ENCODE measurements at regions of chr15 and their contacts with region 1.

Region 1: GRCh38 chr15:65298731-65299130 is 2.9 kb downstream of the RNU5A-1 start:
- DNase-seq: no peak
- ATAC-seq: no peak
- H3K4me3 ChIP-seq: no peak overlapping the region
- H3K27ac ChIP-seq: no peak overlapping the region
- H3K4me1 ChIP-seq: peaks cover 17 to 33% of the 10 kb centered on the region in 2 experiments
- H3K27me3 ChIP-seq: no peaks in the 10 kb centered on the region
- CTCF ChIP-seq: no peak
- POLR2A ChIP-seq: no peak
- RAD21 ChIP-seq: no peak

Region 2: DNA sequence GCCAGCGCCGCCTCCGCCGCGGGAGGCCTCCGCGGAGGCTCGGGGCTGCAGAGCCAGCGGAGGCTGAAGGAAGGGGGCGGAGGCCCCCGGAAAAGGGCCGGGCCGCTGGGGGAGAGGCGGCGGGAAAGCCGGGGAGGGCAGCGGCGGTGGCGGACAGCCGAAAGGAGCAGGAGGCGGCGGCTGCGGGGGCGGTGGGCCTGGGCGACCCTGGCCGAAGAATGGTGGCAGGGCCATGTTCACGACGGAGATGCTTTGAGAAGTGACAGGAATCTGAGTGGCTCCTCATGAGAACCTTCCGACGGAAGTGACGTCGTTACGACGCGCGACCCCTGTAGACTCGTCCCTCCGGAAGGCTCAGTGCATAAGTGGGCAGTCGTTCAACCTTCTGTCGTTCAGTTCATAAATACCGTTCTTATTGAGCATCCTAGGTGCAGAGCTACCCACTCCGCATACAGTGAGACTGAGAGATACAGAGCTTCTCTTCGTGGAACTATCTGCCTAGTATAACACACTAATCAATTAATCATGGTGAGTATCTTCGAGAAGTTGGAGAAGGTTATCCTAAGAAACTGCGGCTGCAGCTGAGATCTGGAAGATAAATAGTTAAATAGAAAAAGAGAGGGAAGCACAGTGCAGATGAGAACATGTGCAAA is 165.1 kb before region 1 on chr15 and contains the start of gene PDCD7:
- CTCF ChIA-PET with region 1: no interaction called
- POLR2A ChIA-PET with region 1: no interaction called
- RAD21 ChIA-PET with region 1: no interaction called
- intact Hi-C with region 1: loop called (anchors 5 kb)
- DNase-seq: peak; percentile 88
- ATAC-seq: peak; percentile 91
- H3K4me3 ChIP-seq: peak within 1 kb of the TSS; percentile 74 to 80
- H3K27ac ChIP-seq: peak within 1 kb of the TSS; percentile 84
- H3K4me1 ChIP-seq: peaks cover 7 to 13% of the 10 kb centered on the region in 2 experiments; a peak in 3 of 4 replicates
- H3K27me3 ChIP-seq: no peaks in the 10 kb centered on the region
- CTCF ChIP-seq: no peak
- POLR2A ChIP-seq: peak; percentile 96
- RAD21 ChIP-seq: no peak
- total RNA-seq, gene PDCD7: 31.6 TPM